ENCODE measurements at regions of chr9 and their contacts with region 1.

Region 1: DNA sequence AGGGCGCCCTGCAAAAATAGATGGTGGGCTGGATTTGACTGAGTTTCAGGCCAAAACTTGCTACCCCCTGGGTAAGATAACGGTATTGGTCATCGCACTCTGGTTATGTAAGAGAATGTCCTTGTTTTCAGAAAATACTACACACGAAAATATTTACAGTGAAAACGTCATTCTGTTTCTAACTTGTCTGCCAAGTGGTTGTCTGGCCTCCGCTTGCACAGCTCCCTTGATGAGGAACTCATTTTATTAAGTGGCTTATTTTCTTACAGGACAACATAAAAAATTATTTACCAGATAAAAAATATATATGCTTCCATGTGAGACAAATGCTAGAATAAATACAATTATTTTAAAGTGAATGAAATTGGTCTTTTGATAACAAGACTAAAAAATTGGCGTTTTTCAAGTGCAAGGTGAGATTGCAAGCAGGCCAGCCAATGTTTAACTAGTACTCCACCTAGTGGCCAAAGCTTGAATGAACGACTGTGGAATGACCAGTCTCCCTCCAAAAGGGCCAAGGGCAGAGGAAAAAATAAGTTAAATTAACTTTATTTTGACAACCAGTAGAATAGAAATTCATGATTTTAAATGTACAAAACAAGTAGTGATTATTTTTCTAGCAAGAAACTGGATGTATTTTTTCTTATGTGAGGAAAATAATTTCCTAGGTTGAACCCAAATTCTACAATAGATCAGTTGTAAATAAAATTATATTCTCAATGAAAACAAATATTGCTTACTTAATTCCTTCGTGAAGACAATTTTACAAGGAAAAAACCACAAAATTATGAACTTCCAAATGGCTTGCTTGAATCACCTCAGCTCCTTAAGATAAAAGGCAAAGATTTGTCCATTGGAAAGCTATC is 93.2 kb downstream of the ZFAND5 start:
- DNase-seq: peak; percentile 71
- CTCF ChIP-seq: peak; percentile 84

Region 2: DNA sequence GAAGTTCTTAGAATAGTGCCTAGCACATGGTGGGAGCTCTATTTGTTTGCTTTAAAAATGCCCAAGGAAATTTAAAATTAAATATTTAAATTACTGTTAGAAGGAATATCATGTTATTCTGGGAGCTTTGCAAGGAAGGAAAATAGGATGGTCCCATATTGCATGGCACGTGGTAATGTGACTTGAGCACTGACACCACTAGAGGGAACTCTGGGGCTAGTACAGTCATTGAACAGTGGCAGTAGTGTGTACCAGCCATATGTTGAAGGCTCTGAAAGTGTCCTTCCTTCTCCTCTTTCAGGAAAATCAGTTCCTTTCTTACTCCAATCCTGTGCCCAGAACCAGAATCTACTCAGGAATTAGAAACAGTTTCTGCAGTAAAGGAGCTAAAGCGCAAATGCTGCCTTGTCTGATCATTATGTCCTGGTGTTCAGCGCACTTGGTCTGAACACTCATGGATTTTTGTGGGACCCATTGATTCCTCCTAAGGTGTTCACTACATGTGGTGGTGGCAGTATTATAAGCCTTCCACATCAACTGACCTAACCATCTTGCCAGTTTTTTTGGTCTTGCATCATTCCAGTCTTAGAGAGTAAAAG is 68.5 kb before region 1 on chr9:
- CTCF ChIA-PET with region 1: interaction called, 25 read pairs
- POLR2A ChIA-PET with region 1: no interaction called
- DNase-seq: peak; percentile 35
- CTCF ChIP-seq: peak; percentile 59

Region 3: GRCh38 chr9:72217306-72217842 is 54.5 kb before region 1 on chr9:
- CTCF ChIA-PET with region 1: no interaction called
- POLR2A ChIA-PET with region 1: no interaction called
- DNase-seq: no peak
- CTCF ChIP-seq: no peak

Region 4: DNA sequence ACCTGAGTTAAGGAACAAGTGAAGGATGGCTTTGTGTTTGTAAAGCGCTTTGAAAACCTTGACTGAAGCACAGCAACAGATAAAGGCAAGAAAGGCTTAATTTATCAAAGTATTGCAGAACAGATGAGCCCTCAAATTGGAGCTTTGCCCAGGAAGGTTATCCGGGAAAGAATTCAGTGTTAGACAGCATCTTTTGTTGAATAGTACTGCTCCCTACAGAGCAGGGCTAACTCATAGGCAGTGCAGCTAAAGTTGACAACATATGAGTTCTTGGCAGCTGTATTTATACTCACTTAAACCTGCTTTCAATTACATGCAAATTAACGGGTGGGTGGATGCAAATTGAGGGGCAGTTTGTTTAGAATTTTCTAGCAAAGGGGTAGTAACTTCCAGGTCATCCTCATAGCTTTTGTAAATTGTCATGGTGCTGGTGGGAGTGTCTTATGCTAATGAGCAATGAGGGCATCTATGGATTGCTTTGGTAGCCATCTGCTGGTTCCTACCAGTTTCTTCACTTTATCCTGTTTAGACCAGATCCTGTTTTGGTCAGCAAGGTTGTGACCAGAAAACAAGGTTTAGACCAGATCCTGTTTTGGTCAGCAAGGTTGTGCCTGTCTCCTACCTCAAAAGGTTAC is 16.8 kb before region 1 on chr9:
- CTCF ChIA-PET with region 1: interaction called, 13 read pairs
- POLR2A ChIA-PET with region 1: no interaction called
- DNase-seq: no peak
- CTCF ChIP-seq: no peak

Region 5: DNA sequence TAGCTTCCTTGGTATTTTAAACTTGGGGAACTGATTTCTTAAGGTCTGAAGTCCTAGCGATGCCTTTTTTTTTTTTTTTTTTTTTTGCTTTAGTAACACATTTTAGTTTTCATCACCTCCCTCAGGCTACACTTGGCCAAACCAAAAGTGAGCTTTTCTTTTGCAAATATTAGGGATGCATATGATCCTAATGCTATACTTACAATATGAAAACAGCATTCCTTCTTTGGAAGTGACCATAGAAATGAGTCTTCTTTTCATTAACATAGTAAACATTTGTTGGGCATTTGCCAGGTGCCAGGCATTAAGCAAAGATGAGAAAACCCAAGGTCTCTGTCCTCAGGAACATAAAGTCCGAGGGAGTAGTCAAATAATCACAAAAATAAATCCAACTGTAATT is 491.2 kb after region 1 on chr9:
- CTCF ChIA-PET with region 1: no interaction called
- POLR2A ChIA-PET with region 1: no interaction called
- DNase-seq: no peak
- CTCF ChIP-seq: no peak

Measured in GM10248 (cell line).